MCF 10A (cell line): ENCODE measurements at regions of chr13 and their contacts with region 1.

Region 1: GRCh38 chr13:76991796-76992547 is at the start of gene CLN5:
- DNase-seq: peak; percentile 92
- H3K4me3 Mint-ChIP-seq: peak within 1 kb of the TSS; percentile 93
- H3K27ac Mint-ChIP-seq: peak within 1 kb of the TSS; percentile 96
- H3K4me1 Mint-ChIP-seq: peaks cover 28% of the 10 kb centered on the region
- H3K27me3 Mint-ChIP-seq: peaks cover 3% of the 10 kb centered on the region
- CTCF ChIP-seq: no peak
- total RNA-seq, gene CLN5: 16.0 and 17.8 TPM in 2 replicates

Region 2: DNA sequence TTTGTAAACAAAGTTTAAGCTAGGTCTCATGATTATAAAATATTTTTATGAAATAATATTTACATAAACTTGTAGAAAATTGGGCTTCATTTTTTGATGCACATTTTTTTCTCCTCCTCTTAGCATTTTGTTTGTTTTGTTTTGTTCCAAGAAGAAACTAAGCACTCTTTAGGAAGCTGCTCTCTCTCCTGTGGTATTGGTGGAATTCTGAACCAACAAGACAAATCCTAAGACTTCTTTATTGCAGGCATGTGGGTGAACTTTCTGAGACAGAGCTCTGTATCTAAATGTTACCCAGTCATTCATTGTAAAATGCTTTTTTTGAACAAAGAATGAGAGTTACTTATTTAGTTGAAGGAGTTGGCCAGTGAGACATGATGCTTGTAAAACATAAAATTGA is 1316.6 kb before region 1 on chr13:
- CTCF ChIA-PET with region 1: no interaction called
- POLR2A ChIA-PET with region 1: no interaction called
- intact Hi-C with region 1: loop called (anchors 10 kb)
- DNase-seq: peak; percentile 20
- H3K4me3 Mint-ChIP-seq: peak overlapping the region; percentile 79
- H3K27ac Mint-ChIP-seq: peak overlapping the region; percentile 93
- H3K4me1 Mint-ChIP-seq: peaks cover 8% of the 10 kb centered on the region
- H3K27me3 Mint-ChIP-seq: no peaks in the 10 kb centered on the region
- CTCF ChIP-seq: no peak

Region 3: GRCh38 chr13:76944456-76944855 is 47.5 kb before region 1 on chr13:
- CTCF ChIA-PET with region 1: interaction called, 3 read pairs
- POLR2A ChIA-PET with region 1: interaction called, 11 read pairs
- intact Hi-C with region 1: no loop called
- DNase-seq: peak; percentile 86
- H3K4me3 Mint-ChIP-seq: no peak overlapping the region
- H3K27ac Mint-ChIP-seq: peak overlapping the region; percentile 69
- H3K4me1 Mint-ChIP-seq: peaks cover 23% of the 10 kb centered on the region
- H3K27me3 Mint-ChIP-seq: no peaks in the 10 kb centered on the region
- CTCF ChIP-seq: no peak

Region 4: DNA sequence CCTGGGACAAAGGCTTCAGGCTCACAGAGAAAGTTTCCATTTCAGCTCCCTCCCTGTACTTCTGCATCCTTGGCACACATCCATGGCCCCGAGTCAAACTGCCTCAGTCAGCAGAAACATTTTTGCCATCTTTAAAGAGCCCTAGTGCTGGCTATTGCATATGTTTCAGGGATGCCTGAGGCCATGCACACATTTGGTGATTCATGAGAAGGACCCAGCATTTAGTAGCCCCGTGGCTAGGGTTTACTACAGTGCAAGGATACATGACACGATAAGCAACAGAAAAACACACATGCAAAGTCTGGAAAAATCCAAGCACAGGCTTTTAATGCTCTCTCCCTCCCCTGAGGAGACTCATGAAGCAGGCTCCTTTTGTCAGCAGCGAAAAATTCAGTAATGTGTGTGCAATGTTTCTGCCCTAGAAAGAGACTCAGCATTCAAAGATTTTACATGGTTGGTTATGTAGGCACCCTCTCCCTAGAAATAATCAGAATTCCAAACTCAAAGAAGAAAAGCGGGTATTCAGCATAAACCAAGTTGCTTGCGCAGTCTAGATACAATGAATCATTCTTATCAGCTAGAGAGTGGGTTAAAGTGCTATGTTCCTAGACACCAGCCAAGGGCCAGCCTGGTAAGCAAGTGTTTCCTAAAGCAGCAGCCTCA is 26.1 kb before region 1 on chr13:
- CTCF ChIA-PET with region 1: no interaction called
- POLR2A ChIA-PET with region 1: interaction called, 31 read pairs
- intact Hi-C with region 1: no loop called
- DNase-seq: peak; percentile 89
- H3K4me3 Mint-ChIP-seq: no peak overlapping the region
- H3K27ac Mint-ChIP-seq: no peak overlapping the region
- H3K4me1 Mint-ChIP-seq: peaks cover 20% of the 10 kb centered on the region
- H3K27me3 Mint-ChIP-seq: no peaks in the 10 kb centered on the region
- CTCF ChIP-seq: no peak

Region 5: GRCh38 chr13:76971851-76972829 is 19.8 kb before region 1 on chr13:
- CTCF ChIA-PET with region 1: interaction called, 82 read pairs
- POLR2A ChIA-PET with region 1: interaction called, 41 read pairs
- intact Hi-C with region 1: no loop called
- DNase-seq: no peak
- H3K4me3 Mint-ChIP-seq: no peak overlapping the region
- H3K27ac Mint-ChIP-seq: no peak overlapping the region
- H3K4me1 Mint-ChIP-seq: peaks cover 21% of the 10 kb centered on the region
- H3K27me3 Mint-ChIP-seq: no peaks in the 10 kb centered on the region
- CTCF ChIP-seq: no peak

Region 6: GRCh38 chr13:77002590-77003190 is 10.7 kb after region 1 on chr13:
- CTCF ChIA-PET with region 1: interaction called, 32 read pairs
- POLR2A ChIA-PET with region 1: interaction called, 29 read pairs
- intact Hi-C with region 1: no loop called
- DNase-seq: peak; percentile 49
- H3K4me3 Mint-ChIP-seq: no peak overlapping the region
- H3K27ac Mint-ChIP-seq: peak overlapping the region; percentile 69
- H3K4me1 Mint-ChIP-seq: peaks cover 6% of the 10 kb centered on the region
- H3K27me3 Mint-ChIP-seq: no peaks in the 10 kb centered on the region
- CTCF ChIP-seq: peak; percentile 55

Region 7: DNA sequence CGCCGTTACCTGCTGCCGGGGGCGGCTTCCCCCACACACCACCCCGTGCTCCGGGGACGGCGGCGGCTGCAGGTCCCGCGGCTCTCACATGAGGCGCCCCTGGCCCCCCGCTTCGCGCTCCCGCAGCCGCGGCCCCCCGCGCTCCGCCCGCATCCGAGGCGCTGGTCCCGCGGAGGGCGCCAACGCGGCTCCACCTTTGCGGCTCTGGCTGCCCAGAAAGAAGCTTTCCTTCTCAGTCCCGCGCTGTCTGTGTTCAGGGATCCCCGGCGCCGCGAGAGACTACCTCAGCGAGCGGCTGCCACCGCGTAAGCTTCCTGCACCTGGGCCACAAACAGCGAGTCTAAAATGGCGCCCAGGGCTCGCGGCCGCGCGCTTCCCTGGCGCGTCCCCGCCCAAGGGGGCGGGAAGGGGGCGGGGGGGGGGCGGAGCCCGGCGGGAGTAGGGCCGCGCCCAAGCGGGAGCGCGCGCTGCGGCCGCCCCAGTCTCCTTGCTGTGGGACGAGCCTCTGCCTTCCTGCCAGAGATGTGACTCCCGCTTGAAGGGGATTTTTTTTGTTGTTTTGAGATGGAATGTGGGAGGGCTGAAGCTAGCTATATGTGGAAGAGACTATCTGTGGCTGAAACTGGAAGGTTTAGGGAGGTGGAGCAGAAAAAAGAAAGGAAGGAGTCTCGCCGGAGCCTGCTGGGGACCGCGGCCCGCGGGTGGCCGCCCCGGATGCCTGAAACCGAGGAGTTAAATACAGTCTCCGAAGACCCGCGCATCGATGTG is 35.0 kb after region 1 on chr13 and contains the start of gene FBXL3:
- CTCF ChIA-PET with region 1: no interaction called
- POLR2A ChIA-PET with region 1: interaction called, 56 read pairs
- intact Hi-C with region 1: no loop called
- DNase-seq: peak; percentile 87
- H3K4me3 Mint-ChIP-seq: peak within 1 kb of the TSS; percentile 81
- H3K27ac Mint-ChIP-seq: peak within 1 kb of the TSS; percentile 86
- H3K4me1 Mint-ChIP-seq: peaks cover 33% of the 10 kb centered on the region
- H3K27me3 Mint-ChIP-seq: no peaks in the 10 kb centered on the region
- CTCF ChIP-seq: no peak
- total RNA-seq, gene FBXL3: 32.5 and 34.9 TPM in 2 replicates